ENCODE measurements at regions of chr11 and their contacts with region 1.

Region 1: GRCh38 chr11:67983951-67984350 is 19.9 kb downstream of the UNC93B1 start:
- DNase-seq: no peak
- ATAC-seq: no peak
- H3K4me3 ChIP-seq: no peak overlapping the region
- H3K27ac ChIP-seq: no peak overlapping the region
- H3K4me1 ChIP-seq: no peaks in the 10 kb centered on the region
- H3K27me3 ChIP-seq: peaks cover 3 to 19% of the 10 kb centered on the region in 2 experiments
- CTCF ChIP-seq: no peak
- EP300 ChIP-seq: no peak
- POLR2A ChIP-seq: no peak
- RAD21 ChIP-seq: no peak

Region 2: GRCh38 chr11:67705264-67705663 is 278.7 kb before region 1 on chr11:
- CTCF ChIA-PET with region 1: no interaction called
- POLR2A ChIA-PET with region 1: no interaction called
- in situ Hi-C with region 1: loop called (anchors 5 kb)
- intact Hi-C with region 1: no loop called
- DNase-seq: no peak
- ATAC-seq: no peak
- H3K4me3 ChIP-seq: no peak overlapping the region
- H3K27ac ChIP-seq: no peak overlapping the region
- H3K4me1 ChIP-seq: no peaks in the 10 kb centered on the region
- H3K27me3 ChIP-seq: peaks cover 11 to 24% of the 10 kb centered on the region in 2 experiments
- CTCF ChIP-seq: no peak
- EP300 ChIP-seq: no peak
- POLR2A ChIP-seq: no peak
- RAD21 ChIP-seq: no peak